ENCODE measurements at regions of chr5 and their contacts with region 1.

Region 1: DNA sequence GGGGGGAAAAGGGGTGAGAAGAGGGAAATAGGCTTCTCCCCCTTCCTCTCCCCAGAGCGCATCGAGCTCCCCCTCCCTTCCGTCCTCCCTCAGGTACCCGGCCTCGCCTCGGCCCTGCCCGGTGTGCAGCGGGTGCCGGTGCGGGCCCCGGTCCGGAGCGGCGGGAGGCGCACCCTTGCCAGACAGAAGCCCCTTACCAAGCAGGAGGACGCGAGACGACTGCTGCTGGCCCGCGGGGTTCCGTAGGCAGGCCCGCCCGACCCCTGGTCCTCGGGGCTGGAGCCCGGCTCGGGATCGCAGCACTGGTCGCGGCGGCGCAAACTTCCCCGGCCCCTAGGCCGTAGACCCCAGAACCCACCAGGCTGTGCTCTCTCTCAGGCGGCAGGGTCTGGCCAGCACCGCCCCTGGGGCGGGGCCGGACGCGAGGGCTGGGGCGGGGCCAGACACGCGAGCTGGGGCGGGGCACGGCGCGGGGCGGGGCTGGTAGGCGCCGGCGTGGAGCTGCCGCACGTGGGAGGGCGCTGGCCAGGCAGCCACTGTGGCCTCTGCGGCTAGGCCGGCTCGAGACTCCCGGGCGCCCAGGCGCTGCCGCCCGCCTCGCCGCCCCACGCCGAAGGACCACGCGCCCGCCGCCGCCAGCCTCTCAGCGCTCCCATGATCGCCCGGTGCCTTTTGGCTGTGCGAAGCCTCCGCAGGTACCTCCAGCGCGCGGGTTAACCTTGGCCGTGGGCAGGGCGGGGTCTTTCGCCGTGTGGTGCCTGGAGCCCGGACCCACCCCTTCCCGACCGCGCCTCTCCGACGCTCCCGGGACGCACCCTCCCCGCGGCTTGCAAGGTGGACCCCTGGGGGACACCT is at the starts of genes NLN and SGTB:
- DNase-seq: peak; percentile 84 to 99 (median 90)

Region 2: GRCh38 chr5:64722588-64722987 is 999.4 kb before region 1 on chr5:
- intact Hi-C with region 1: no loop called
- DNase-seq: no peak

Region 3: GRCh38 chr5:65624571-65625555 is 97.1 kb before region 1 on chr5 and contains the starts of genes SHLD3 and TRAPPC13:
- intact Hi-C with region 1: loop called (anchors 2 kb)
- DNase-seq: peak; percentile 77 to 97 (median 86)